Ovary (tissue), 10 donors: ENCODE measurements at regions of chr2 and their contacts with region 1.

Region 1: DNA sequence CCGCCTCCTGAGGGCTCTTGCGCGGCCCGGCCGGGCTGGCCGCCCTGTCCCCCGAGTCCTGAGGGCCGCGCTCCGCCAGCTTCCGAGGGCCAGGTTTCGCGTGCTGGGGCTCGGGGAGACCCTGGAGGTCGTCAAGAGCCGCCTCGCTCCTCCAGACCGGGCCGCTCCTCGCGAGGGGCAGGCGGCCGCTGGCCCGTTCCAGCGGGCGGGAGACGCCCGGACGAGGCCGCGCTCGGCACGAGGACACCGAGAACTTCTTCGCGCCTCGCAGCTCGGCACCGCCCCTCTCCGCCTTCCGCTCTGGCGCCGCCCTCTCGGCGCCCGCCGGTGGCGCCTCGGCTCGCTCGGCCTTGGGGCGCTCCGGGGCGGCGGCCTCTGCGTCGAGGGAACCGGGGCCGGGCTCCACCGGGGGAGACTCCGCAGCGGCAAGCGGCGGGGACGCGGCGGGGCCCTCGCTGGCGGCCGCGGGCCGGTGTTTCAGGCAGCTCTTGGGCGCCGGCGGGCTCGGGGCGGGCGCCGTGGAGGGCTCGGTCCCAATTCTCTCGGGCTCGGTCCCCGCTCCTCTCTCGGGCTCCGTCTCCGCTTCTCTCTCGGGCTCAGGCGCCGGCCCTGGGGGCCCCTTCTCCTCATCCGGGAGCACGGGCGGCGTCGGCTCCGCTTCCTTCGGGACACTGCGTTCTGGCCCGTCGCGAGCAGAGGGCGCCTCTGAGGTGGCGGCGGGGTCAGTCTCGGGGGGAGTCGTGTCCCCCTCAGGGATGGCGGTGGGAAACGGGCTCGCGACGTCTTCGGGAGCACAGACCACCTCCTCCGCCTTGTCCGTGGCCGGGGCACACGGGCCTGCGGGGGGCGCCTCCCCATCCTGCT is 91.6 kb upstream of the MGAT4A start:
- DNase-seq: peak in 1 of 5 donors; percentile 29
- H3K4me3 ChIP-seq: peak overlapping the region; percentile 27
- H3K27ac ChIP-seq: no peak overlapping the region
- H3K4me1 ChIP-seq: peaks cover 3% of the 10 kb centered on the region
- H3K27me3 ChIP-seq: no peaks in the 10 kb centered on the region
- CTCF ChIP-seq: no peak
- EP300 ChIP-seq: no peak
- POLR2A ChIP-seq: no peak

Region 2: GRCh38 chr2:98713332-98714015 is 109.1 kb before region 1 on chr2:
- intact Hi-C with region 1: no loop called
- DNase-seq: no peak
- H3K4me3 ChIP-seq: no peak overlapping the region
- H3K27ac ChIP-seq: no peak overlapping the region
- H3K4me1 ChIP-seq: peaks cover 3% of the 10 kb centered on the region
- H3K27me3 ChIP-seq: no peaks in the 10 kb centered on the region
- CTCF ChIP-seq: no peak
- EP300 ChIP-seq: no peak
- POLR2A ChIP-seq: no peak

Region 3: GRCh38 chr2:98731041-98731893 is 91.3 kb before region 1 on chr2 and contains the start of gene MGAT4A:
- intact Hi-C with region 1: loop called in 1 of 4 experiments (anchors 5 kb)
- DNase-seq: peak; percentile 45 to 76 (median 70)
- H3K4me3 ChIP-seq: peak within 1 kb of the TSS; percentile 88
- H3K27ac ChIP-seq: peak within 1 kb of the TSS; percentile 64 to 72
- H3K4me1 ChIP-seq: no peaks in the 10 kb centered on the region
- H3K27me3 ChIP-seq: no peaks in the 10 kb centered on the region
- CTCF ChIP-seq: peak in 1 of 3 donors; percentile 16
- EP300 ChIP-seq: no peak
- POLR2A ChIP-seq: no peak
- total RNA-seq, gene MGAT4A: 8.3 to 14.7 (median 13.6) TPM

Region 4: GRCh38 chr2:98909317-98910211 is 87.0 kb after region 1 on chr2:
- intact Hi-C with region 1: no loop called
- DNase-seq: peak in 4 of 5 donors; percentile 29 to 48 (median 40)
- H3K4me3 ChIP-seq: no peak overlapping the region
- H3K27ac ChIP-seq: no peak overlapping the region
- H3K4me1 ChIP-seq: peaks cover 3% of the 10 kb centered on the region
- H3K27me3 ChIP-seq: no peaks in the 10 kb centered on the region
- CTCF ChIP-seq: no peak
- EP300 ChIP-seq: no peak
- POLR2A ChIP-seq: no peak

Region 5: GRCh38 chr2:98944775-98945174 is 122.2 kb after region 1 on chr2:
- intact Hi-C with region 1: no loop called
- DNase-seq: no peak
- H3K4me3 ChIP-seq: no peak overlapping the region
- H3K27ac ChIP-seq: no peak overlapping the region
- H3K4me1 ChIP-seq: peaks cover 2% of the 10 kb centered on the region
- H3K27me3 ChIP-seq: no peaks in the 10 kb centered on the region
- CTCF ChIP-seq: no peak
- EP300 ChIP-seq: no peak
- POLR2A ChIP-seq: no peak